Activated naive CD4-positive, alpha-beta T cell treated with anti-CD3 and anti-CD28 coated beads, Interleukin-2, amount 10 ng/mL, durations not matched to agents 7 days and 5 days (primary cell): ENCODE measurements at regions of chr15 and their contacts with region 1.

Region 1: GRCh38 chr15:40893733-40894688 is at the start of gene VPS18:
- DNase-seq: peak; percentile 99
- H3K4me3 Mint-ChIP-seq: peak within 1 kb of the TSS; percentile 98
- H3K27ac Mint-ChIP-seq: peak within 1 kb of the TSS; percentile 97
- H3K4me1 Mint-ChIP-seq: peaks cover 24% of the 10 kb centered on the region
- H3K27me3 Mint-ChIP-seq: peaks cover 23% of the 10 kb centered on the region

Region 2: GRCh38 chr15:40454904-40455391 is 439.1 kb before region 1 on chr15:
- CTCF ChIA-PET with region 1: no interaction called
- DNase-seq: peak; percentile 51
- H3K4me3 Mint-ChIP-seq: peak overlapping the region; percentile 62
- H3K27ac Mint-ChIP-seq: peak overlapping the region; percentile 90
- H3K4me1 Mint-ChIP-seq: peaks cover 75% of the 10 kb centered on the region
- H3K27me3 Mint-ChIP-seq: no peaks in the 10 kb centered on the region

Region 3: GRCh38 chr15:40873625-40874561 is 20.1 kb before region 1 on chr15 and contains the start of gene RHOV:
- CTCF ChIA-PET with region 1: interaction called, 20 read pairs
- DNase-seq: peak; percentile 68
- H3K4me3 Mint-ChIP-seq: peak within 1 kb of the TSS; percentile 69
- H3K27ac Mint-ChIP-seq: no peak within 1 kb of the TSS
- H3K4me1 Mint-ChIP-seq: peaks cover 18% of the 10 kb centered on the region
- H3K27me3 Mint-ChIP-seq: peaks cover 71% of the 10 kb centered on the region